T-cell (primary cell): ENCODE measurements at regions of chr5 and their contacts with region 1.

Region 1: GRCh38 chr5:139690064-139690802 is 42.1 kb downstream of the CXXC5 start:
- DNase-seq: peak in 3 of 35 experiments; percentile 11 to 58 (median 20)
- ATAC-seq: peak; percentile 43 to 65 (median 47)
- H3K4me3 ChIP-seq: no peak overlapping the region
- H3K4me3 Mint-ChIP-seq: no peak overlapping the region
- H3K27ac ChIP-seq: no peak overlapping the region
- H3K27ac Mint-ChIP-seq: no peak overlapping the region
- H3K4me1 ChIP-seq: peaks cover 0 to 9% of the 10 kb centered on the region in 2 experiments
- H3K4me1 Mint-ChIP-seq: peaks cover 0 to 10% (median 8%) of the 10 kb centered on the region in 3 donors
- H3K27me3 ChIP-seq: peaks cover 0 to 30% of the 10 kb centered on the region in 2 experiments
- H3K27me3 Mint-ChIP-seq: no peaks in the 10 kb centered on the region

Region 2: GRCh38 chr5:139110526-139111180 is 579.6 kb before region 1 on chr5:
- CTCF ChIA-PET with region 1: no interaction called
- POLR2A ChIA-PET with region 1: no interaction called
- DNase-seq: no peak
- ATAC-seq: no peak
- H3K4me3 ChIP-seq: no peak overlapping the region
- H3K4me3 Mint-ChIP-seq: no peak overlapping the region
- H3K27ac ChIP-seq: no peak overlapping the region
- H3K27ac Mint-ChIP-seq: no peak overlapping the region
- H3K4me1 ChIP-seq: no peaks in the 10 kb centered on the region
- H3K4me1 Mint-ChIP-seq: no peaks in the 10 kb centered on the region
- H3K27me3 ChIP-seq: no peaks in the 10 kb centered on the region
- H3K27me3 Mint-ChIP-seq: no peaks in the 10 kb centered on the region

Region 3: DNA sequence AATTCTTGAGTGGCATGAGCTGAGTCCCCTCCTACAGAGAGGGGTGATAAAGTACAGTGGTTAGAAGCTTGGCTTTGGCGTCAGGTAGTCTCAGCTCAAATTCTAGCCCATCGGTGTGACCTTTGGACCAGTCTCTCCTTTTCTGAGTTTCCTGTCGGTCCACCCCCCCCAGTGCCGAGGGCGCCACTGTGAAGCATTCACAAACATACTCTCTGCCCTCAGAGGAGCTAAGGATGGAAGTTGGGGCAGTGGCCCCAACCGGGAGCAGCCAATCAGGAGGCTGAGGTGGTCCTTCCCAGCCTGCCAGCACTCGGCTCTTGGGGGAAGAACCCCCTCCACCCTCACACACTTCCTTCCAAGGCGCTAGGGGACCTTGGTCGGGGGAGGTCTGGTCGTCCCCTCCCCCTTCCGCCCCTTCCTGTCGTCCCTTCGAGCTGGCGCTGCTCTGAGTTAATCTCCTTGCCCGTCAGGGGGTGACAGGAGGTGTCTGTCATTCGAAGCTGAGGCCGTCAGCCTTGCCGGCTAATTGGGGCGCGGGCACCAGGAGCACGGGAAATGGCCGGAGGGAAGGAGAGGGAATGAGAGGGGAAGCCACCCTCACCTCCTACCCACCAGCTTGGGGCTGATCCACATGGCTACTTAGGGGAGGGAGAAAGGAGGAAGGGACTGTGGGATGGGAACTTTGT is 11.0 kb after region 1 on chr5:
- CTCF ChIA-PET with region 1: no interaction called
- POLR2A ChIA-PET with region 1: no interaction called
- DNase-seq: no peak
- ATAC-seq: peak in 1 of 4 experiments; percentile 28
- H3K4me3 ChIP-seq: peak overlapping the region in 1 of 2 donors; percentile 26
- H3K4me3 Mint-ChIP-seq: peak overlapping the region in 1 of 3 donors; percentile 32
- H3K27ac ChIP-seq: no peak overlapping the region
- H3K27ac Mint-ChIP-seq: no peak overlapping the region
- H3K4me1 ChIP-seq: peaks cover 7 to 44% of the 10 kb centered on the region in 2 experiments
- H3K4me1 Mint-ChIP-seq: peaks cover 20 to 42% (median 32%) of the 10 kb centered on the region in 3 donors
- H3K27me3 ChIP-seq: peaks cover 0 to 66% of the 10 kb centered on the region in 2 experiments
- H3K27me3 Mint-ChIP-seq: peaks cover 8 to 31% of the 10 kb centered on the region in 2 donors

Region 4: GRCh38 chr5:139723986-139724587 is 33.9 kb after region 1 on chr5:
- CTCF ChIA-PET with region 1: no interaction called
- POLR2A ChIA-PET with region 1: interaction called, 3 to 11 read pairs
- DNase-seq: no peak
- ATAC-seq: no peak
- H3K4me3 ChIP-seq: no peak overlapping the region
- H3K4me3 Mint-ChIP-seq: no peak overlapping the region
- H3K27ac ChIP-seq: no peak overlapping the region
- H3K27ac Mint-ChIP-seq: no peak overlapping the region
- H3K4me1 ChIP-seq: no peaks in the 10 kb centered on the region
- H3K4me1 Mint-ChIP-seq: no peaks in the 10 kb centered on the region
- H3K27me3 ChIP-seq: no peaks in the 10 kb centered on the region
- H3K27me3 Mint-ChIP-seq: no peaks in the 10 kb centered on the region

Region 5: GRCh38 chr5:139925650-139926640 is 235.7 kb after region 1 on chr5:
- CTCF ChIA-PET with region 1: no interaction called
- POLR2A ChIA-PET with region 1: no interaction called
- DNase-seq: peak in 19 of 35 experiments; percentile 4 to 53 (median 22)
- ATAC-seq: peak; percentile 49 to 74 (median 59)
- H3K4me3 ChIP-seq: no peak overlapping the region
- H3K4me3 Mint-ChIP-seq: no peak overlapping the region
- H3K27ac ChIP-seq: peak overlapping the region; percentile 48
- H3K27ac Mint-ChIP-seq: peak overlapping the region; percentile 35 to 56
- H3K4me1 ChIP-seq: peaks cover 0 to 23% of the 10 kb centered on the region in 2 experiments
- H3K4me1 Mint-ChIP-seq: peaks cover 0 to 3% (median 0%) of the 10 kb centered on the region in 3 donors
- H3K27me3 ChIP-seq: peaks cover 7 to 18% of the 10 kb centered on the region in 2 experiments
- H3K27me3 Mint-ChIP-seq: peaks cover 26 to 33% of the 10 kb centered on the region in 2 donors